Breast epithelium (tissue), 4 donors: ENCODE measurements at regions of chr3 and their contacts with region 1.

Region 1: DNA sequence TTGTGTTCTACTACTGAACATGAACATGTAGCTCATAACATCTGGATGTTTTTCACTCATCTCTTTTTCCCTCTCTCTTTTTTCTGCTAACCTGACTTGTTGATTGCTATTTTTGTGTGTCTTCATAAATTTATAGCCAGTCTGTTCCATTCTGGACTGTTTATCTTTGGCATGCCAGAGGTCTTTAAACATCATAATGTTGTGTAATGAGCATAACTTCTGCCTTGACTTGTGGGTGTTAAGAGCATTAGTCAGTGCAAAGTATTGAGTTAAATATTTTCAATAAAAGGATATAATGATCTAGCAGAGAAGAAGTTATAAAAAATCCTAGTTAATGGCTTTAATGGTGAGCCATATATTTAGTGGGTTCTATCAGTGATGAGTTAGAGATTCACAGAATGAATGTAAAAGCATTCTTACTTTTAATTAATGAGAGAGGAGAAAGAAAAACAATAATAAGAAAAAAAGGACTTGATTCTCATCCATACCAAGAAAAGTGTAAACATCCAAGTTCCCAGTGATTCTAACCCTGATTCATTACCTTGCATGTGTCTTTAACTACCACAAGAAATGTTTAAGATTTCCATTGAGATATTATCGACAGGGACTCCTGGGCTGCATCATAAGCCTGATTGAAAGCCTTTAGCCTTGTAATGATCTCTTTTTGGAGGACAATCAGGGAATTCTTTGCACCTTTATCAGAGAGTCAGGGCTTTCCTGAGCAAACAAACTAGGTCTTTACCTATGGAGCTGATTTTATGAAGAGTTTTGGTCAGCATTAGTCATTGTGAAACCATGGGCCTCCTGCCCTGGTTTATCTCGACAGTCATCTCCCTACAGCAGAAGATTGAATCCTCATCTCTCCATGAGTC is 22.9 kb downstream of the MITF start:
- DNase-seq: no peak
- H3K4me3 ChIP-seq: no peak overlapping the region
- H3K27ac ChIP-seq: peak overlapping the region in 1 of 2 donors; percentile 10
- H3K4me1 ChIP-seq: no peaks in the 10 kb centered on the region
- H3K27me3 ChIP-seq: no peaks in the 10 kb centered on the region
- CTCF ChIP-seq: no peak
- POLR2A ChIP-seq: no peak

Region 2: GRCh38 chr3:69739204-69740102 is 22.7 kb before region 1 on chr3 and contains the start of gene MITF:
- intact Hi-C with region 1: loop called (anchors 1 kb)
- DNase-seq: peak; percentile 83 to 84
- H3K4me3 ChIP-seq: peak within 1 kb of the TSS; percentile 74 to 95 (median 81)
- H3K27ac ChIP-seq: peak within 1 kb of the TSS; percentile 74 to 91
- H3K4me1 ChIP-seq: no peaks in the 10 kb centered on the region
- H3K27me3 ChIP-seq: no peaks in the 10 kb centered on the region
- CTCF ChIP-seq: no peak
- POLR2A ChIP-seq: no peak
- total RNA-seq, gene MITF: 23.3 to 45.8 (median 25.6) TPM

Region 3: GRCh38 chr3:70811880-70812279 is 1049.7 kb after region 1 on chr3:
- intact Hi-C with region 1: no loop called
- DNase-seq: peak in 1 of 2 donors; percentile 28
- H3K4me3 ChIP-seq: no peak overlapping the region
- H3K27ac ChIP-seq: peak overlapping the region in 1 of 2 donors; percentile 41
- H3K4me1 ChIP-seq: no peaks in the 10 kb centered on the region
- H3K27me3 ChIP-seq: no peaks in the 10 kb centered on the region
- CTCF ChIP-seq: no peak
- POLR2A ChIP-seq: no peak